CD4-positive, alpha-beta T cell (primary cell): ENCODE measurements at regions of chr20 and their contacts with region 1.

Region 1: DNA sequence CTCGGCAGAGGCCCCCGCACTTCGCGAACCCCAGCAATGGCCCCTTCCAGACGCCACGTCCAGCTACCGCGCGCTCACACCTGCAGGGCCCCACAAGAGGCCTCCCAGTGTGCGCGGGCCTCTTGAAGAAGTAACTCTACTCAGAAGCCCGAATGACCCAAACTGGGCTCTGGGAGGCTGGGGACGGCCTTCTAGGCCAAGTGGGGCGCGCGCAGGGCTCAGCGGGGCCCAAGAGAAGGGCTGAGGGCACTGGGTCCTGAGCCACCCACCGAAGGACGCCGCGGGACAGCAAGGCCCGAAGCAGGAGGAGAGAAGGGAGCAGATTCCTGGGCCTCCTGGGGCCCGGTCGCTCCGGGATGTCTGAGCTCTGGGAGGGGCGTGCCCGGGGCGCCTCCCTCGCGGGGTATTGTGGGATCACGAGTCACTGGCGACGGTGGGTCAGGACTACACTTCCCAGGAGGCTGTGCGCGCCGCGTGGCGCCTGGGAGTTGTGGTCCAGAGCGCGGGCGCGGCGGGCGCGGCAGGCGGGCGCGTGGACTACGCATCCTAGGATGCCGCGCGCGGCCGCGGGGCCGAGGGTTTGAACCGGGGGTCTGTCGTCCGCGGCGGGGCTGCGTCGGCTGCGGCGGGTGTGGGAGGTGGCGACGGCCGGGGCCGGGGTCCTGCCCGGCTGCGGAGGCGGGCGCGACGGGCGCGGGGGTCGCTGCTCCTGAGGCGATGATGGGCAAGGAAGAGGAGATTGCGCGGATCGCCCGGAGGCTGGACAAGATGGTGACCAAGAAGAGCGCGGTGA is at the start of gene TCEA2:
- DNase-seq: peak; percentile 86 to 96 (median 94)
- ATAC-seq: peak; percentile 90
- H3K4me3 ChIP-seq: peak within 1 kb of the TSS; percentile 56
- H3K4me3 Mint-ChIP-seq: peak within 1 kb of the TSS; percentile 85
- H3K27ac ChIP-seq: peak within 1 kb of the TSS in 1 of 2 donors; percentile 22
- H3K27ac Mint-ChIP-seq: peak within 1 kb of the TSS; percentile 48
- H3K4me1 ChIP-seq: peaks cover 58% of the 10 kb centered on the region
- H3K4me1 Mint-ChIP-seq: peaks cover 41% of the 10 kb centered on the region
- H3K27me3 ChIP-seq: no peaks in the 10 kb centered on the region
- H3K27me3 Mint-ChIP-seq: no peaks in the 10 kb centered on the region
- CTCF ChIP-seq: no peak
- total RNA-seq, gene TCEA2: 28.4 to 29.9 TPM

Region 2: GRCh38 chr20:63664861-63665716 is 397.7 kb before region 1 on chr20:
- CTCF ChIA-PET with region 1: no interaction called
- POLR2A ChIA-PET with region 1: no interaction called
- intact Hi-C with region 1: no loop called
- DNase-seq: no peak
- ATAC-seq: no peak
- H3K4me3 ChIP-seq: no peak overlapping the region
- H3K4me3 Mint-ChIP-seq: no peak overlapping the region
- H3K27ac ChIP-seq: no peak overlapping the region
- H3K27ac Mint-ChIP-seq: no peak overlapping the region
- H3K4me1 ChIP-seq: no peaks in the 10 kb centered on the region
- H3K4me1 Mint-ChIP-seq: peaks cover 7% of the 10 kb centered on the region
- H3K27me3 ChIP-seq: no peaks in the 10 kb centered on the region
- H3K27me3 Mint-ChIP-seq: no peaks in the 10 kb centered on the region
- CTCF ChIP-seq: no peak

Region 3: DNA sequence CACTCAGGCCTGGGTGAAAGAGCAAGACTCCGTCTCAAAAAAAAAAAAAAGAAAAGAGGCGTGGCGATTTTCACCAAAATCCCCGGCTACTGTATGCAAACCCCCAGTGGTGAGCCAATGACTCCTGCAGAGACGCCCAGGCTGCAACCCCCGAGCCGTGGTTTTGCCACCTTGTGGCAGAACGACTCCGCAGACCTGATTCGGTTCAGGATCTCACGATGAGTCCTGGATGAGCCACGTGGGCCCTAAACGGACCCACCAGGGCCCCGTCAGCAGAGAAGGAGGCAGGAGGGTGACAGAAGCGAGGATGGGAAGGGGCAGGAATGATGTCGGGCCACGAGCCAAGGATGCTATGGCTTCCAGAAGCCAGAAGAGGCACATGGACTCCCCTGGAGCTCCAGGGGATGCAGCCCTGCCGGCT is 280.7 kb before region 1 on chr20:
- CTCF ChIA-PET with region 1: no interaction called
- POLR2A ChIA-PET with region 1: no interaction called
- intact Hi-C with region 1: loop called in 1 of 2 experiments (anchors 2 kb)
- DNase-seq: peak in 13 of 14 experiments; percentile 16 to 88 (median 48)
- ATAC-seq: peak; percentile 93
- H3K4me3 ChIP-seq: peak overlapping the region; percentile 14
- H3K4me3 Mint-ChIP-seq: peak overlapping the region; percentile 43
- H3K27ac ChIP-seq: peak overlapping the region in 1 of 2 donors; percentile 22
- H3K27ac Mint-ChIP-seq: peak overlapping the region; percentile 67
- H3K4me1 ChIP-seq: peaks cover 23% of the 10 kb centered on the region
- H3K4me1 Mint-ChIP-seq: peaks cover 23% of the 10 kb centered on the region
- H3K27me3 ChIP-seq: no peaks in the 10 kb centered on the region
- H3K27me3 Mint-ChIP-seq: no peaks in the 10 kb centered on the region
- CTCF ChIP-seq: peak; percentile 51

Region 4: DNA sequence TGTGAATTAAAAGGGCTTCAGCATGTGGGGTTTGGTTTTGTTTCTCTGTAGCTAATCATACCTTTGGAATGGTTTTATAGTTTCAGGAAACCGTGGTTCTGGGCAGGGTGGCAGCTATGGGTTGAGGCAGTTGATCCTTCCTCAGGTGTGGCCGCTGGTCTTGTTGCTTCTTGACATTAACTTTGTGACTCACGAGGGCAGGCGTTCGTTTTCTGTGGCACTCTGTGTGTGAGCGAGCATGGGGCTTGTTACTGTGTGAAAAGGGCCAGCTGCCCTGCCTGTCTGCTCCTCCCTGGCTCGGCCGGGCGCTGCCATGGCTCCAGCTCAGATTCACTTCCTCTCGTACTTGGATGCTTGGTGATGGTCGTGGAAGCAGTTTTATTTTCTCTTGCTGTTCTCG is 151.6 kb before region 1 on chr20:
- CTCF ChIA-PET with region 1: no interaction called
- POLR2A ChIA-PET with region 1: no interaction called
- intact Hi-C with region 1: loop called in 1 of 2 experiments (anchors 1 kb)
- DNase-seq: peak in 2 of 14 experiments; percentile 20 to 41
- ATAC-seq: no peak
- H3K4me3 ChIP-seq: no peak overlapping the region
- H3K4me3 Mint-ChIP-seq: peak overlapping the region; percentile 9
- H3K27ac ChIP-seq: no peak overlapping the region
- H3K27ac Mint-ChIP-seq: peak overlapping the region; percentile 56
- H3K4me1 ChIP-seq: peaks cover 41% of the 10 kb centered on the region
- H3K4me1 Mint-ChIP-seq: peaks cover 32% of the 10 kb centered on the region
- H3K27me3 ChIP-seq: no peaks in the 10 kb centered on the region
- H3K27me3 Mint-ChIP-seq: no peaks in the 10 kb centered on the region
- CTCF ChIP-seq: no peak

Region 5: DNA sequence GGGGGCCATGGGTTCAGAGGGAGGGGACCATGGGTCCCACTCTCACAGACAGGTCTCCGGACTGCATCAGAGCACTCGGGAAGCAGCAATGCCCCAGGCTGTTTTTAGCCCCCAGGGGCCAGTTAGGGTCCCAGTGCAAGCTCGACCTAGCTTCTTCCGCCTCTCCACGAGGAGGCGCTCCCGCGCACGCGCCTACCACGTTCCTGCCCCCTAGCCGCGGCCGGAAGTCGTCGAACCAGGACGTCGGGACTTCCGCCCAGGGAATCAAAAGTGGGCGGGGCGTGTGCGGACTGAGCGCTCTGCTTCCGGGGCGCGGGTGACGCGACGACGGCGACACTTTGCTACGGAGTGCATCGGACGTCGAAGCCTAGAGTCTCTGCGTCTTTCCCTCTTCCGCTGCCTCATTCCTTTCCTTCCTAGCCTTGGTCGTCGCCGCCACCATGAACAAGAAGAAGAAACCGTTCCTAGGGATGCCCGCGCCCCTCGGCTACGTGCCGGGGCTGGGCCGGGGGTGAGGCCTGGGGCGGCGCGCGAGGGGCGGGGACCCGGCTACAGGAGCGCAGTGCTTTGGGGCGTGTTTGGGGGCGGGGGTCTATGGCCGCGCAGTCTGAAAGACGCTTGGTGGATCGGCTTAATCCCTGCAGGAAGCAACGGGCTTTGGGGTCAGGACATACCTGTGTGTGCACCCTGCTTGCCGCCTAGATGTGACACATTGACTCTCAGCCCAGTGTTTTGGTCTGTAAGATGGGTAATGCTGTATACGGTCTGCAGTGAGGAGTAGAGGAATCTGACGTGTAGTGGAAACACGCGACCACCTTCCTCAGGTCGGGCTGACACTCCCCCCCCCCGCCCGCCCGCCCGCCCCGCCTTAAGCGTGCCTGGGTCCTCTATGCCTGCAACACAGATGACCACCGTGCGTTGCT is 81.7 kb before region 1 on chr20 and contains the start of gene PRPF6:
- CTCF ChIA-PET with region 1: interaction called, 5 read pairs
- POLR2A ChIA-PET with region 1: interaction called, 3 read pairs
- intact Hi-C with region 1: loop called in 1 of 2 experiments (anchors 2 kb)
- DNase-seq: peak; percentile 89 to 98 (median 94)
- ATAC-seq: peak; percentile 58
- H3K4me3 ChIP-seq: peak within 1 kb of the TSS; percentile 69
- H3K4me3 Mint-ChIP-seq: peak within 1 kb of the TSS; percentile 90
- H3K27ac ChIP-seq: peak within 1 kb of the TSS; percentile 85 to 87
- H3K27ac Mint-ChIP-seq: peak within 1 kb of the TSS; percentile 98
- H3K4me1 ChIP-seq: peaks cover 60% of the 10 kb centered on the region
- H3K4me1 Mint-ChIP-seq: peaks cover 67% of the 10 kb centered on the region
- H3K27me3 ChIP-seq: no peaks in the 10 kb centered on the region
- H3K27me3 Mint-ChIP-seq: no peaks in the 10 kb centered on the region
- CTCF ChIP-seq: peak; percentile 93
- total RNA-seq, gene PRPF6: 50.6 to 51.3 TPM

Region 6: GRCh38 chr20:64079273-64080012 is 16.7 kb after region 1 on chr20 and contains the start of gene RGS19:
- CTCF ChIA-PET with region 1: interaction called, 6 read pairs
- POLR2A ChIA-PET with region 1: interaction called, 13 read pairs
- intact Hi-C with region 1: loop called (anchors 1 to 2 kb)
- DNase-seq: peak in 13 of 14 experiments; percentile 42 to 87 (median 68)
- ATAC-seq: peak; percentile 33
- H3K4me3 ChIP-seq: peak within 1 kb of the TSS; percentile 93
- H3K4me3 Mint-ChIP-seq: peak within 1 kb of the TSS; percentile 91
- H3K27ac ChIP-seq: peak within 1 kb of the TSS; percentile 61 to 80
- H3K27ac Mint-ChIP-seq: peak within 1 kb of the TSS; percentile 86
- H3K4me1 ChIP-seq: peaks cover 63% of the 10 kb centered on the region
- H3K4me1 Mint-ChIP-seq: peaks cover 46% of the 10 kb centered on the region
- H3K27me3 ChIP-seq: no peaks in the 10 kb centered on the region
- H3K27me3 Mint-ChIP-seq: no peaks in the 10 kb centered on the region
- CTCF ChIP-seq: no peak
- total RNA-seq, gene RGS19: 9.7 to 14.8 TPM